ENCODE measurements at regions of chr16 and their contacts with region 1.

Region 1: DNA sequence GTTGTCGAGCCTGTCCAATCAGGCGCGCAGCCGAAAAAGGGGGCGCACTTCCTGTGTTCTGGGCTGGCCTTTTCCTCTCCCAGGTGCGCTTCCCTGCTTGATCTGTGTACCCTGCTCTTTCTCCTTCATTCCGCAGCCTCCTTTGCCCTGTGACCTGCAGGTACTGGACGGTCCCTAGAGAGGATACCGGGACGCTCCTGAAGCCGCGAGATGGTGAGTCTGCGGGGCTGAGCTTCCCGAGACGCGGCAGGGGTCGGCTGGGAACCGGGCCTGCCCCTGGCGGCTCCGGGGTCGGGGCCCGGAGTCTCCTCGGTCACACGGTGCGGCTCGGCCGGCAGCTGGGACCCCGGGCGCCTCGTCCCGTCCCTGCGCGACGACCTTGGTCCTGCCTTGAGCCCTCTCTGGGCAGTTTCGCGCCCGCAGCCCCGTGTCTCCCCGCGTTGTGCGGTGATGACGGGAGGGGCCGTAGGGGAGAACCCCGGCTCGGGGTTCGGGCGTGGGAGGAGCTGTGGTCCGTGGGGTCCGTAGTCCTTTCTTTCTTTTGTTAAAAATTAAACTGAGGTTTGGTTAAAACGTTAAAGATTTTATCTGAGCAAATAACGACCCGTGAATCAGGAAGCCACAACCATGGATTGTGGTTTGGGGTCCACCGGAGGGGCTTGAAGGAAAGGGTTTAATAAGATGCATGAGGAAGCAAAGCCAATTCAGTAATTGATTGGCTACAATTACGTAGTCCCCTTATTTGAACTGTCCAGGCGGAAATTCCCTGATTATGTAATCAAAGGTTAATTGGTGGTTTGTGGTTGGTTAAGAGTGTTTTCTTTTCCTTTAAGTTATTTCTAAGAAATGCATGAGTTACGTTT is 172.8 kb upstream of the ZNF267 start:
- DNase-seq: peak; percentile 74 to 89
- ATAC-seq: peak; percentile 79
- H3K4me3 ChIP-seq: peak overlapping the region; percentile 80 to 94
- H3K27ac ChIP-seq: no peak overlapping the region
- H3K4me1 ChIP-seq: no peaks in the 10 kb centered on the region
- H3K27me3 ChIP-seq: no peaks in the 10 kb centered on the region

Region 2: DNA sequence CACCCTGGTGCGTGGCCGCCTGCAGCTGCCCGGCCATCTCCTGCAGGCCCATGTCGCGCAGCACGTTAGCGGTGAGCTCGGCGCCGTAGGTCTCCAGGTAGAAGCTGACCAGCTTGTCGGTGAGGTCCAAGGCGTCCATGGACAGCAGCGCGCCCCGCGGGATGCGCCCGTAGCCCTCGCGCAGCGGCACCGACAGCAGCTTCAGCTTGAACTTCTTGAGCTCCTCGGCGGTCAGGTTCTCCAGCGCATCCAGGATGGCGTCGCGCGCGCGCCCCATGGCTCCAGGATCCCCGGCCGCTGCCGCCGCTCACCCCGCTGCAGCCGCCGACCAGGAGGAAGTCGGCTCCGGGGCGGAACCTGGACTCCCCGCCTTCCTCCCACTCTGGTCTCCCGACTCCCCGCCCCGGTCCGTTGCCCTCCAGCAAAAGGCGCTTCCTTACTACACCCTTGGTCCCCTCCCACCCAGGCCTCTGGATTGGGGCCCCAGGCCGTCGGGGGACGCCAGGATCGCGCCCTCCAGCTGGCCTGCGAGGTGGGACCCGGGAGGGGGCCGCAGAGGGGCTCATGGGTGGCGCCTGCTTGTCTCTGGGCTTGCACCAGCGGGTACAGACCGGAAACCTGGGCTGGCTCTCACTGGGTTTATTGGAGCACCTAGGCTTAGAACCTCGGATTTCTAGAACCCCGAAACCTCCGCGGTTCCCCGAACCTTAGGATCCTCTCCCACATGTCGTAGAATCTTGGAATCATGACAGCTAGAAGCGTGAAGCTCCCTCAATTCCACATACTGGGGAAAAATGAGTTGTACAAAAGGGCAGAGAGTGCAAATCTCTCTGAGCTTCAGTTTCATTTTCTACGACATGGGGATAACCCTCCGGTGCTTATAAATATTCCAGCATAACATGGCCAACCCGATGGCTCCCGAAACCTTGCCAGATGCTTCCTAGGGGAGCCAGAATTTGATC is 498.1 kb before region 1 on chr16 and contains the start of gene PYCARD:
- intact Hi-C with region 1: no loop called
- DNase-seq: peak; percentile 85 to 86
- ATAC-seq: peak; percentile 82
- H3K4me3 ChIP-seq: peak within 1 kb of the TSS; percentile 5 to 45
- H3K27ac ChIP-seq: no peak within 1 kb of the TSS
- H3K4me1 ChIP-seq: no peaks in the 10 kb centered on the region
- H3K27me3 ChIP-seq: no peaks in the 10 kb centered on the region
- total RNA-seq, gene PYCARD: 13.3 to 23.9 TPM

Region 3: DNA sequence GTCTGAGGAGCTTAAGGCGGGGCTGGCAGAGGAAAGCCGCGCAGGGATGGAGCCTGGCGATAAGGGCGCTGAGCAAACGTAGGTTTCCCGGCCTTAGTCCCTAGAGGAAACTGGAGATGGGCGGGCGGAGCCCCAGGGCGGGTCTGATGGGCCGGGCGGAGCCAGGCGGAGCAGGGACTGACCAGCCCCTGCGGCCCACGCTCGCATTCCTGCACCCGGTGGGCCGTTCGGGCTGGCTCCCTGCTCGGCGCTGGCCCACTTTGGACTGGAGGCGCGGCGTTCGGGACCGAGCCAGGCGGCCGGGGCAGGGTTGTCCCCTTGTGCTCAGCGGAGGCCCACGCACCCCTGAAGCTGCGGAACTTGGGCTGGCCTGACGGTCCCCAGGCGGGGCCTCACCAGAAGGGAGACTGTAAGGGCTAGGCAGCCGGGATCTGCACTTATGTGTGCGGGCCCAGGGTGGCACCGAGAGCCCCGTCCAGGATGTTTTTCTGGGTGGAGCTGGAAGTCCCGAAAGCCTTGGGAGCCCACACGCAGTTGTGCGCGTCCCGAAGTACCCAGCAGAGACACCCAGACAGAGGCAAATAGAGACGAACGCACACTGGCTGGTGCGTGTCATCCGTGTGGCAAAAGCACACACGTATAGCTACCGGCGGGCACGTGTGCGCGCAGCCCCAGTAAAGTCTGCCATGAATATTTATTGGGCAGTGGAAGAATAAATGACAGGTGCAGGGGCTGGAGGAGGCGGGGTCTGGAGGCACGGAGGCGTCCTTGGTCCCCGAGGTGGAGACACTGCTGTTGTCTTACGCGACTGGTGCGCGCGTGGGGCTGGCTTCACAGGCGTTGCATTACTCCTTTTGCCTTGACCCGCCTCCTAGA is 485.2 kb before region 1 on chr16:
- intact Hi-C with region 1: loop called in 1 of 2 experiments (anchors 10 kb)
- DNase-seq: peak; percentile 73 to 86
- ATAC-seq: peak; percentile 75
- H3K4me3 ChIP-seq: peak overlapping the region; percentile 1 to 8
- H3K27ac ChIP-seq: no peak overlapping the region
- H3K4me1 ChIP-seq: no peaks in the 10 kb centered on the region
- H3K27me3 ChIP-seq: no peaks in the 10 kb centered on the region

Measured in aorta (tissue), 5 donors.